ENCODE measurements at regions of chr4 and their contacts with region 1.

Region 1: DNA sequence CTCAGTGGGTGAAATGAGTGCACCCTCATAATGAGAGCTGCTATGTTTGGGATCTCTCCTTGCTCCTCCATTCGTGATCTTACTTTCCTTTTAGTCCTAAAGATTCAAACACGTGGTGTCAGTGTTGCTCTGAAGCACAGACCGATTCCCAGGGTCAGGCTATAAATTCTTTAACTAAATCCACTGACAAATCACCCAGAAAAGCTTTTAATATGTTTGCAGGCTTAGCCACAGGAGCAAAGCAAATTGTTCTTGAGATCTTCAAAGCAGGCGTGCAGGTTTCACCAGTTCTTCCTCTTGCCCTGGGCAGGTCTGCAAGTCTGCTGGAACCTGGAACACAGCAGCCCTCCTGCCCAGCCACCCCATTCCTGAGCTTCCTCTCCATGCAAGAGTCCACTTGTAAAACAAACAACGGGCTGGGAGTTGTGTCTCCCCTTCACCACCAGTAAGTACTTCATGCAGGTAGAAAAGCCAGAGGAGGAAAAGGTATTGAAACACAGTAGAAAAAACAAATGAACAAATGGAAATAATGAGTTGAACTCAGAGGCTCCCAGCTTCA is 70.1 kb upstream of the ENPP6 start:
- DNase-seq: no peak
- H3K4me3 Mint-ChIP-seq: no peak overlapping the region
- H3K27ac Mint-ChIP-seq: no peak overlapping the region
- H3K4me1 Mint-ChIP-seq: peaks cover 52% of the 10 kb centered on the region
- H3K27me3 Mint-ChIP-seq: peaks cover 4% of the 10 kb centered on the region

Region 2: DNA sequence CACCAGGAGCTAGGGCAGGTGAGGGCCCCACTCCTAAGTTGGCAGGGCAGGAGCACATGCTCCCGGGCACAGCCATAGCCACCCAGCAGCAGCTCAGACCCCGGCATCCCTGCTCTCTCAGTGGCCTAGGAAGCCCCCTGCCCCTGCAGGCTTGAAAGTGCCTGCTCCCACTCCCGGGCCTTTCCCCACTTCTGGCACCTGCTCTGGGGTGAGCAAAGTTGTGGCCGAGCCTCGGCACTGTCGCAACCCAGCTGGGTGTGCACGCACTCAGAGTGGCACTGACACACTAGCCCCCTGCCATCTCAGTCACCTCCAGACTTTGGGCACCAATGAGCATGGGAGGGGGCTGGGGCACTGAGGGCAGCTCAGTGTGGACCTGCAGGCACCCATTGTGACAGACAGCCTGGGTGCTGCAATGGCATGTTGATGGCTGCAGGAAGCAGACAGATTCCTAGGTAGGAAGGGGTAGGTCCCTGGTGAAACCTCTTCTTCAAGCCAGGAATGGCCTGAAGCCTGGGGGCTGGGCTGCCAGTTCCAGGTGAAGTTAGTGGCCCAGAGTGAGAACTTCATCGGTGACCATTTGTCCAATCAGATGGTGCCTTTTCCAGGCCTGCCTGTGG is 904.1 kb before region 1 on chr4:
- CTCF ChIA-PET with region 1: no interaction called
- intact Hi-C with region 1: no loop called
- DNase-seq: no peak
- H3K4me3 Mint-ChIP-seq: no peak overlapping the region
- H3K27ac Mint-ChIP-seq: no peak overlapping the region
- H3K4me1 Mint-ChIP-seq: no peaks in the 10 kb centered on the region
- H3K27me3 Mint-ChIP-seq: no peaks in the 10 kb centered on the region

Region 3: DNA sequence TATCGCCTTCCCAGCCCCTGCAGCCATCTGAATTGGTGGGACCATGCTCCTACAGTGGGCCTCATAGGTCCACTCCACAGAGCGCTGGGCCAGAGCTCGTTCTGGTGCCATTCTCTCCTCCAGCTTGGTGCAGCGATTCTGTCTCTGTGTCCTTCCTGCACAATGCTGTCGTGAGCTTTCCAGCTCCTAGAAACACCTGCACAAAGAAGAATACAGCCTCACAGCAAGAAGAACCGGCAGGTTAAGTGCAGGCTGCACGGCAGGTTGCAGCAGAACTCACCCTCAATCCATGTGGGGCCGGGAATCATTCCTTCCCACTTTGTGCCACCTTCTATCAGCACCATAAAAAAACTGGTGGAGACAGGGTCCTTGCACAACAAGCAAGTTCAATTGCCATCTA is 31.1 kb after region 1 on chr4:
- CTCF ChIA-PET with region 1: interaction called, 6 read pairs
- intact Hi-C with region 1: loop called (anchors 1 kb)
- DNase-seq: no peak
- H3K4me3 Mint-ChIP-seq: no peak overlapping the region
- H3K27ac Mint-ChIP-seq: no peak overlapping the region
- H3K4me1 Mint-ChIP-seq: peaks cover 36% of the 10 kb centered on the region
- H3K27me3 Mint-ChIP-seq: peaks cover 2% of the 10 kb centered on the region

Region 4: GRCh38 chr4:184343502-184344177 is 55.9 kb after region 1 on chr4:
- CTCF ChIA-PET with region 1: no interaction called
- intact Hi-C with region 1: loop called (anchors 2 kb)
- DNase-seq: peak; percentile 61
- H3K4me3 Mint-ChIP-seq: peak overlapping the region; percentile 77
- H3K27ac Mint-ChIP-seq: peak overlapping the region; percentile 60
- H3K4me1 Mint-ChIP-seq: peaks cover 14% of the 10 kb centered on the region
- H3K27me3 Mint-ChIP-seq: peaks cover 3% of the 10 kb centered on the region

Region 5: GRCh38 chr4:184722798-184723197 is 435.0 kb after region 1 on chr4:
- CTCF ChIA-PET with region 1: no interaction called
- intact Hi-C with region 1: no loop called
- DNase-seq: no peak
- H3K4me3 Mint-ChIP-seq: no peak overlapping the region
- H3K27ac Mint-ChIP-seq: no peak overlapping the region
- H3K4me1 Mint-ChIP-seq: peaks cover 6% of the 10 kb centered on the region
- H3K27me3 Mint-ChIP-seq: no peaks in the 10 kb centered on the region

Region 6: DNA sequence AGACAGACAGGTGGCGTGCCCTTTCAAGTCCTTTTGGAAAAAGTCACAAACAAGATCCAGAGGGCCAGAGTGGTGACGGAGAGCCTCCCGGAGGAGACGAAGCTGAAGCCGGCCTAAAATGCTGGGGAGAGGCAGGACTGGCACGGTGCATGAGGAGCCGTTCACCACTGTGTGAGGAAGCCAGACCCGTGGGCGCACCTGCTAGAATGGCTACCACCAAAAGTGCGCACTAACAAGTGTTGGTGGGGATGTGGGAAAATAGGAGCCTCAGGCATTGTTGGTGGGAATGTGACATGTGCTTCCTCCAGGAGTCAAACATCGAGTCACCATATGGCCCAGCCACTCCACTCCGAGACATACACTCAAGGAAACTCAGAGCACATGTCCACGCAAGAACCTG is 663.1 kb after region 1 on chr4:
- CTCF ChIA-PET with region 1: no interaction called
- intact Hi-C with region 1: no loop called
- DNase-seq: no peak
- H3K4me3 Mint-ChIP-seq: no peak overlapping the region
- H3K27ac Mint-ChIP-seq: no peak overlapping the region
- H3K4me1 Mint-ChIP-seq: no peaks in the 10 kb centered on the region
- H3K27me3 Mint-ChIP-seq: peaks cover 4% of the 10 kb centered on the region